H1 (cell line): ENCODE measurements at regions of chr10 and their contacts with region 1.

Region 1: GRCh38 chr10:92419740-92420545 is 129.0 kb downstream of the MARCHF5 start:
- DNase-seq: peak; percentile 51 to 66
- H3K4me3 ChIP-seq: peak overlapping the region; percentile 4 to 55 (median 34); a peak in 7 of 8 replicates
- H3K27ac ChIP-seq: no peak overlapping the region
- H3K4me1 ChIP-seq: peaks cover 3 to 9% (median 7%) of the 10 kb centered on the region in 4 experiments
- H3K27me3 ChIP-seq: peaks cover 0 to 19% (median 9%) of the 10 kb centered on the region in 4 experiments; a peak in 4 of 7 replicates
- CTCF ChIP-seq: peak; percentile 46 to 49 (median 48)
- EP300 ChIP-seq: no peak
- POLR2A ChIP-seq: no peak
- RAD21 ChIP-seq: peak; percentile 20 to 36; a peak in 3 of 4 replicates

Region 2: DNA sequence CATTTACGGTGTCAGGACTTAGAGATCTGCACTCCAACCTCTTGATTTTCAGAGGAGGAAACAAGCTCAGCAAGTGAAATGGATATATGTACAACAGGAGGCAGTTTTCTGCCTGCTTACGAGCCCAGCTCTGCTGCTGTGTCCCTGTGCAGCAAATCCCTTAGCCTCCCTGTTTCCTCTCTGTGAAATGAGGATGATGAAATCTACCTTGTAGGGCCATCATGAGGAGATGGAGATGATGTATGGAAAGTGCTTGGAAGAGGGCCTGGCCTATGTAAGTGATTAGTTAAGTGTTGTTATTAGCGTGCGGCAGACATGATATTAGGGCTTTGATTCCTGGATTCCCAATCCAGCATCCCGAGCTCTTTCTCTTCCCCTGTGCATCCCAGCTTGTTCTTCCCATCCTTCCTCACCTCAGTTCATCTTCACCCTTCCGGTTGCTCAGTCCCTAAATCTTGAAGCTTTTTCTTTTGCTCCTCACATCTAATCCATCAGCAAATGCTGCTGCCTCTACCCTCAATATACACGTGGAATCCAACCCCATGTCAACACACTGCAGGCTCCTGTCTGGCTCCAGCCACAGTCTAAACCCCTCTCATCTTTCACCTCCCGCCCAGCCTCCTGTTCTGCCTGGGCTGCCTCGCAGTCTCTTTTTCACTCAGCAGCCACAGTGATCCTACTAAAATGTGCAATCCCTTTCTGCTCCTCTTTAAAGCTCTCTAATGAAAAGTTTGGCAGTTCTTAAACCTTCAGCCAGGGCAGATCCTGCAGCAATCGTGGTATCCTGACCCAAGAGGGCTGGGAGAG is 15.1 kb before region 1 on chr10:
- CTCF ChIA-PET with region 1: interaction called, 14 read pairs
- POLR2A ChIA-PET with region 1: interaction called, 4 read pairs
- DNase-seq: no peak
- H3K4me3 ChIP-seq: no peak overlapping the region
- H3K27ac ChIP-seq: no peak overlapping the region
- H3K4me1 ChIP-seq: peaks cover 0 to 13% (median 2%) of the 10 kb centered on the region in 4 experiments; a peak in 4 of 7 replicates
- H3K27me3 ChIP-seq: no peaks in the 10 kb centered on the region
- CTCF ChIP-seq: no peak
- EP300 ChIP-seq: no peak
- POLR2A ChIP-seq: no peak
- RAD21 ChIP-seq: no peak